ENCODE measurements at regions of chr14 and their contacts with region 1.

Region 1: DNA sequence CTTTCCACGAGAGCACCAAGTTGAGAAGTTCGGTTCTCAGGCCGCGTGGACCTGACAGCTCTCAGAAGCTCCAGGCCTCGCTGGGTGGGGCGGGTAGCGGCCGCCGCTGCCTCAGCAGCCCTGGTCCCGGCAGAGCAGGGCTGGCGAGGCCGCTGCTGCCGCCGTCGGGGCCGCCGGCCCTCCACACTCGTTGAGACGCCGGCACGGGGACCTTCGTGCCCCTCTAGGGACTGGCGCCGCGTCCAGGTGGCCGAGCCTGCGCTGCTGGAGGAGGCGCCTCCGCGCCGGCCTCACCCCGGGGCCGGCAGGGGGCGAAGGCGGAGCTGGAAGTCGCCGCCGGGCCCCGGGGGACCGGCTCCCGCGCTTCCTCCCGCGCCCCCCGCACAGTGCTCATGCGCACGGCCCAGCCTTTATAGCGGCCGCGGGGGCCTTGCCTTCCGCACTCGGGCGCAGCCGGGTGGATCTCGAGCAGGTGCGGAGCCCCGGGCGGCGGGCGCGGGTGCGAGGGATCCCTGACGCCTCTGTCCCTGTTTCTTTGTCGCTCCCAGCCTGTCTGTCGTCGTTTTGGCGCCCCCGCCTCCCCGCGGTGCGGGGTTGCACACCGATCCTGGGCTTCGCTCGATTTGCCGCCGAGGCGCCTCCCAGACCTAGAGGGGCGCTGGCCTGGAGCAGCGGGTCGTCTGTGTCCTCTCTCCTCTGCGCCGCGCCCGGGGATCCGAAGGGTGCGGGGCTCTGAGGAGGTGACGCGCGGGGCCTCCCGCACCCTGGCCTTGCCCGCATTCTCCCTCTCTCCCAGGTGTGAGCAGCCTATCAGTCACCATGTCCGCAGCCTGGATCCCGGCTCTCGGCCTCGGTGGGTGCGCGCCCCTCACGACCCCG is at the start of gene COCH:
- DNase-seq: peak; percentile 66
- ATAC-seq: peak; percentile 76
- H3K4me3 Mint-ChIP-seq: peak within 1 kb of the TSS; percentile 88
- H3K27ac Mint-ChIP-seq: peak within 1 kb of the TSS; percentile 35
- H3K4me1 Mint-ChIP-seq: peaks cover 24% of the 10 kb centered on the region
- H3K27me3 Mint-ChIP-seq: peaks cover 11% of the 10 kb centered on the region
- CTCF ChIP-seq: no peak
- total RNA-seq, gene COCH: 10.2 and 10.4 TPM in 2 replicates

Region 2: GRCh38 chr14:30855345-30856037 is 18.9 kb before region 1 on chr14:
- CTCF ChIA-PET with region 1: no interaction called
- POLR2A ChIA-PET with region 1: no interaction called
- intact Hi-C with region 1: loop called (anchors 2 kb)
- DNase-seq: no peak
- ATAC-seq: peak; percentile 61
- H3K4me3 Mint-ChIP-seq: no peak overlapping the region
- H3K27ac Mint-ChIP-seq: no peak overlapping the region
- H3K4me1 Mint-ChIP-seq: peaks cover 20% of the 10 kb centered on the region
- H3K27me3 Mint-ChIP-seq: no peaks in the 10 kb centered on the region
- CTCF ChIP-seq: no peak

Region 3: DNA sequence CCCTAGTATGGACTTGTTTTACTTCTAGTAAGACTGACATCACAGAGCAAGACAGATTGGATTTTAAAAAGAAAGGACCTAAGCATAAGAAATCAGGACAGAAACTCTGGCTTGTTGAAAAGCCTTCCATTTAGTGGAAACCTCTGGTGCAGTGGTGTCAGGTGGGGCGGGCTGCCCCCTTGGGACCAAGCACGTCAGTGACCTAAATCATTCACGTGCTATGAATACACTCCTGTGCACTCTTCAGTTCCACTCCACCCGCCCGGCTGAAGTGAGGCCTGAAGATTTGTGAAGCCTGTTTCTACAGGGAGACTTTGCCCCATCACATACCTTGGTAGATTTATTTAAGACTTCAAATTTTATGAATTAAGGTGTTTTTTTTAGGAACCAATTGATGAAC is 210.0 kb after region 1 on chr14:
- CTCF ChIA-PET with region 1: no interaction called
- POLR2A ChIA-PET with region 1: no interaction called
- intact Hi-C with region 1: loop called (anchors 1 kb)
- DNase-seq: peak; percentile 33
- ATAC-seq: peak; percentile 98
- H3K4me3 Mint-ChIP-seq: no peak overlapping the region
- H3K27ac Mint-ChIP-seq: no peak overlapping the region
- H3K4me1 Mint-ChIP-seq: peaks cover 9% of the 10 kb centered on the region
- H3K27me3 Mint-ChIP-seq: no peaks in the 10 kb centered on the region
- CTCF ChIP-seq: no peak

Region 4: DNA sequence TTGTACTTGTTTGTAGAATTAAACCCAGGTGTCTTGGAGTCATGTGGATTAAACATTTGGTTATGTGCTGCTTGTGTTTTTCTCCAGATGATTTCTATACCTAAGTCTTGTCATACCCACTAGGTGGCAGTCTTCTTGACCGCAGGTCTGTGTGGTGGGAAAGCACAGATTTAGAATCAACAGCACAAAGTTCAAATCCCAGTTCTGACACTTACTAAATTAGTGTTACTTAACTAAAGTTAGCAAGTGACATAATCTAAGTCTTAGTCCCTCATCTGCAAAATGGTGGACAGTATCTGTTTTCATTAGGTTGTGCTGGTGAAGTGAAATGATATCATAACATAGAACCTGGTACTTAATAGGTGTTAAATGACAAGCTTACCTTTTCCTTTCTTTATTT is 1051.8 kb after region 1 on chr14:
- CTCF ChIA-PET with region 1: no interaction called
- POLR2A ChIA-PET with region 1: no interaction called
- intact Hi-C with region 1: no loop called
- DNase-seq: no peak
- ATAC-seq: peak; percentile 47
- H3K4me3 Mint-ChIP-seq: no peak overlapping the region
- H3K27ac Mint-ChIP-seq: no peak overlapping the region
- H3K4me1 Mint-ChIP-seq: no peaks in the 10 kb centered on the region
- H3K27me3 Mint-ChIP-seq: no peaks in the 10 kb centered on the region
- CTCF ChIP-seq: no peak

Measured in activated B cell treated with CpG ODN at 0.5 μM for 24 hours (primary cell).